ENCODE measurements at regions of chr5 and their contacts with region 1.

Region 1: GRCh38 chr5:66426259-66427138 is 169.7 kb upstream of the MAST4 start:
- DNase-seq: no peak
- ATAC-seq: peak in 2 of 8 donors; percentile 25 to 27
- H3K4me3 ChIP-seq: no peak overlapping the region
- H3K27ac ChIP-seq: peak overlapping the region in 1 of 10 donors; percentile 44
- H3K4me1 ChIP-seq: peaks cover 0 to 51% (median 7%) of the 10 kb centered on the region in 9 donors
- H3K27me3 ChIP-seq: no peaks in the 10 kb centered on the region
- CTCF ChIP-seq: no peak

Region 2: DNA sequence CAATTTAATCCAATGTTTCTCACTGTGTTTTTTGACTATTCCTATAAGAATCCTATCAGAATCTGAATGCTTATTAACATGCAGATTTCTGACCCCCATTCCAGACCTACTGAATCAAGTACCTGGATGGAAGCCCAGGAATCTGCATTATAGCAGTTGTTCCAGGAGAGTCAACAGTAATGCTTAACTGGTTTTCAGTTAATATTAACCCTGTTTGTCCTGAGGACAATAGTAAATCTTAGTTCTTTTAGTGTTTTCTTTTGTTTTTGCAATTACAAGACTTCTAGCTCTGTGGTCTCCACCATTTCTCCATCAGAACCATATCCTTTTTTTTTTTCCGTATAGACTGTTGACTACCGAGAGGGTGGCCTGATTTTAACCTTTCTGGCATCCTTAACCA is 114.2 kb before region 1 on chr5:
- intact Hi-C with region 1: loop called in 1 of 10 experiments (anchors 10 kb)
- DNase-seq: no peak
- ATAC-seq: no peak
- H3K4me3 ChIP-seq: no peak overlapping the region
- H3K27ac ChIP-seq: no peak overlapping the region
- H3K4me1 ChIP-seq: peaks cover 0 to 15% (median 11%) of the 10 kb centered on the region in 9 donors
- H3K27me3 ChIP-seq: no peaks in the 10 kb centered on the region
- CTCF ChIP-seq: no peak